Calu3 (cell line): ENCODE measurements at regions of chr2 and their contacts with region 1.

Region 1: DNA sequence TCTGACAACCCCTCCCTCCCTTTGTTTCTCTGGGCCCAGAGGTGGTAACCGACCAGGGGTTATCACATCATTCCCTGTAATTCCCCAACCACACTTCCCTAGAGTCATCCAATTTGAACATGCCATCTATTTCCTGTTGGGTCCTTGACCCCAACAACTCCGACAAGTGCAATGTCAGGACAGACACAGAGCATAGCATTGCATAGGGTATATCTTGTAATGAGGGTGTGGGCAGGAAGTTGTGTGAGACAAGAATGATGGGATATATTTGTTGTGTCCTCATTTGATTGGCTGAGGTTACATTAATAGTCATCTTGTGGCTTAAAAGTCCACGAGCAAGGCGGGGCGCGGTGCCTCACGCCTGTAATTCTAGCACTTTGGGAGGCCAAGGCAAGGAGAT is 33.4 kb upstream of the CNOT11 start:
- DNase-seq: no peak
- H3K4me3 Mint-ChIP-seq: no peak overlapping the region
- H3K27ac Mint-ChIP-seq: no peak overlapping the region
- H3K4me1 Mint-ChIP-seq: no peaks in the 10 kb centered on the region
- H3K27me3 Mint-ChIP-seq: no peaks in the 10 kb centered on the region
- CTCF ChIP-seq: no peak

Region 2: DNA sequence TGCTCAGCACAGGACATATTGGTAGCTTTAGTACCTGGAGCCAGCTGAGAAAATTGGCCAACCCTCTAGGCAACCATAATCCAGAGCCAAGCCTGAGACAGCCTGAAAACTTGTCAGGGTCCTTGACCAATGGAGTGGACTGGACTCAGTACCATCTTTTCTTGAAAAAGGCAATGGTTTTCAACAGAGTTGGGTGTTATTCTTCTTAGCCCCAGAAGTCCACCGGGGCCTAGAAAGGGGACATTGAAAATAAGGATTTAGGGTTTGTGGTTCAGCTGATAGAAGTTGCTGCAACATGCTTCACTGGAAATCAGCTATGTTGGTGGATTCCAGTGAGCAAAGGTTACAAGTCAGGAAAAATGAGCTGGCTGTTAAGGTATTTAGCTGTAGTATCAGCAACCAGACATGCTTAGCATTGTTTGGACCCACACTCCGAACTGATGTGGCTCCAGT is 11.3 kb after region 1 on chr2:
- CTCF ChIA-PET with region 1: interaction called, 13 read pairs
- intact Hi-C with region 1: no loop called
- DNase-seq: no peak
- H3K4me3 Mint-ChIP-seq: no peak overlapping the region
- H3K27ac Mint-ChIP-seq: no peak overlapping the region
- H3K4me1 Mint-ChIP-seq: peaks cover 36% of the 10 kb centered on the region
- H3K27me3 Mint-ChIP-seq: no peaks in the 10 kb centered on the region
- CTCF ChIP-seq: no peak